ENCODE measurements at regions of chr17 and their contacts with region 1.

Region 1: DNA sequence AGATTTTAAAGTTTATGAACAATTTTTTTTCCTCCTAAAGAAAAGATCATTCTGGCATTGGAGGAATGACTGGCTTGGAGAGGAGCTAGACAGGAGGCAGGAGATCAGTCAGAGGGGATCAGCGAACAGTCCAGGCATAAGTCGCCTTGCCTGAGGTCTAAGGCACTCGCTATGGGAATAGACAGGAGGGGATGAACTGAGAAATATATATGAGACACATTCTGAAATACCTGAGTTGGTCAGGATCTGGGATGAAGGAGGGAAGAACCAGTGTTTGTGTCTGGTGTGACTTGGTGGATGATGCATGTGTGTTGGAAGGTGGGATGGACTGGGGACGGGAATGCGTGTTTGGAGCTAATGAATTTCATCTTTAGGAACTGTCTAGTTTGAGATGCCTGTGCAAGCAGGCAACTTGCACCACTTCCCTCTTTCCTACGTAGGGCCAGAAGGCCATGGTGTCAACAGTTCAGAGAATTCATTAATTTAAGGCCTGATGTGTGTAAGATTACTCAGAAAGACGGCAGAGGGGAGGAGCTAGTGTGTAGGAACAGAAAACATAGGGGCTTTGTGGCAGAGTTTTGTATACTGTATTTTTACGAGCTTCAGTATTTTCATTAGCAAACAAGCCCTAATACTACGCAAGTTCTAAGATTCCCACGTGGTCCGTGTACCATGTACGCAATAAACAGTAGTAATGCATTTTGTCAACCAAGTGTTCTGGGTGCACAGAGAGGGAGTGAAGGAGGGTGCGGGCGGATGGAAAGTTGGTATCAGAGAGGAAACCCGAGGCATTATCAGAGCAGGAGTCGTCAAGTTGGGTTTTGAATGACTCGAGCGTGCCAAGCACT is 825 bp downstream of the HEATR6 start:
- DNase-seq: peak in 5 of 9 donors; percentile 30 to 41 (median 35)
- ATAC-seq: peak; percentile 66
- H3K4me3 ChIP-seq: peak overlapping the region; percentile 82
- H3K4me3 Mint-ChIP-seq: peak overlapping the region; percentile 86 to 97 (median 94)
- H3K27ac ChIP-seq: peak overlapping the region; percentile 70
- H3K27ac Mint-ChIP-seq: peak overlapping the region; percentile 82 to 97 (median 87)
- H3K4me1 ChIP-seq: peaks cover 8 to 14% of the 10 kb centered on the region in 2 donors
- H3K4me1 Mint-ChIP-seq: peaks cover 17 to 41% (median 28%) of the 10 kb centered on the region in 7 donors
- H3K27me3 ChIP-seq: no peaks in the 10 kb centered on the region
- H3K27me3 Mint-ChIP-seq: no peaks in the 10 kb centered on the region

Region 2: GRCh38 chr17:59964482-59965328 is 113.2 kb before region 1 on chr17 and contains the start of gene RNFT1:
- CTCF ChIA-PET with region 1: no interaction called
- POLR2A ChIA-PET with region 1: no interaction called
- intact Hi-C with region 1: loop called in 1 of 2 experiments (anchors 5 kb)
- DNase-seq: peak; percentile 78 to 97 (median 88)
- ATAC-seq: peak; percentile 97
- H3K4me3 ChIP-seq: peak within 1 kb of the TSS; percentile 92
- H3K4me3 Mint-ChIP-seq: peak within 1 kb of the TSS; percentile 86 to 99 (median 94)
- H3K27ac ChIP-seq: peak within 1 kb of the TSS; percentile 84
- H3K27ac Mint-ChIP-seq: peak within 1 kb of the TSS; percentile 88 to 99 (median 94)
- H3K4me1 ChIP-seq: peaks cover 16 to 18% of the 10 kb centered on the region in 2 donors
- H3K4me1 Mint-ChIP-seq: peaks cover 16 to 32% (median 23%) of the 10 kb centered on the region in 7 donors
- H3K27me3 ChIP-seq: no peaks in the 10 kb centered on the region
- H3K27me3 Mint-ChIP-seq: peaks cover 0 to 5% (median 0%) of the 10 kb centered on the region in 5 donors
- total RNA-seq, gene RNFT1: 22.8 to 45.8 (median 33.1) TPM